ENCODE measurements at regions of chr10 and their contacts with region 1.

Region 1: DNA sequence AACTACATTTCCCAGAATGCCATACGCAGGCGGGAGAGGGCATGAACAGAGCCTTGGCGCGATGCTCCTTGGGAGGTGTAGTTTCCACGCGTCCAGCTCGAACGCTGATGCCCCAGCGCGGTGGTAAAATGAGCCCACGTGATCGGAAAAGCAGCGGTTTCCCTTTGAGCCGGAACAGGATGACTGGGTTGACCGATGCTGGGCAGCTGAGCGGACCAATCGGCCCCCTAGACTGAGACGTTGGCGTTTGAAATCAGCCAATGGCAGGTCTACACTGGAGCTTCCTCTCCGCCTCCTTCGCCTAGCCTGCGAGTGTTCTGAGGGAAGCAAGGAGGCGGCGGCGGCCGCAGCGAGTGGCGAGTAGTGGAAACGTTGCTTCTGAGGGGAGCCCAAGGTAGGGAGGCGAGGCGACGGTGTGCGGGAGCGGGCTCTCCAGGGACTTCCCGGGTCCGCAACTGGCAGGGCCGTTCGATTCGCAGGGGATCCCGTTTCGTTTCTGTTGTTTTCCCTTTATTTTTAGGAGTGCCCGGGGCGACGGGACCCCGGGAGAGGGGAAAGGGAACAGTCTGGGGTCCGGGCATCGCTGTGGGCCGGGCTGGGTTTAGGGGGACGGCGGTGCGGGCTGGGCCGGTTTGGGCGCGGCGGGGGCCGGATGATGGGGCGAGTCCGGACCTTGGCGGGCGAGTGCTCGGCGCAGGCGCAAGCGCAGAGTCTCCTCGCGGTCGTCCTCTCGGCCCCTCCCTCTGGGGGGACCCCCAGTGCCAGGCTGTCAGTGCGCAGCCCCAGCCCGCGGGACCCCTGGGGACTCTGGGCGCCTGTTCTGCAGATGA is at the start of gene BUB3:
- DNase-seq: peak; percentile 97 to 99
- ATAC-seq: peak; percentile 98 to 99 (median 98)
- H3K4me3 ChIP-seq: peak within 1 kb of the TSS; percentile 75
- H3K27ac ChIP-seq: peak within 1 kb of the TSS; percentile 84
- H3K4me1 ChIP-seq: peaks cover 41% of the 10 kb centered on the region
- H3K27me3 ChIP-seq: peaks cover 3 to 41% (median 24%) of the 10 kb centered on the region in 3 donors
- CTCF ChIP-seq: peak; percentile 18
- total RNA-seq, gene BUB3: 28.6 to 35.3 (median 31.2) TPM

Region 2: GRCh38 chr10:122953827-122954730 is 200.2 kb before region 1 on chr10 and contains the start of gene C10orf88:
- intact Hi-C with region 1: loop called in 1 of 2 experiments (anchors 10 kb)
- DNase-seq: peak; percentile 98 to 99
- ATAC-seq: peak; percentile 98 to 100 (median 100)
- H3K4me3 ChIP-seq: peak within 1 kb of the TSS; percentile 87
- H3K27ac ChIP-seq: peak within 1 kb of the TSS; percentile 84
- H3K4me1 ChIP-seq: peaks cover 2% of the 10 kb centered on the region
- H3K27me3 ChIP-seq: no peaks in the 10 kb centered on the region
- CTCF ChIP-seq: no peak
- total RNA-seq, gene C10orf88: 4.3 to 8.3 (median 6.8) TPM

Region 3: DNA sequence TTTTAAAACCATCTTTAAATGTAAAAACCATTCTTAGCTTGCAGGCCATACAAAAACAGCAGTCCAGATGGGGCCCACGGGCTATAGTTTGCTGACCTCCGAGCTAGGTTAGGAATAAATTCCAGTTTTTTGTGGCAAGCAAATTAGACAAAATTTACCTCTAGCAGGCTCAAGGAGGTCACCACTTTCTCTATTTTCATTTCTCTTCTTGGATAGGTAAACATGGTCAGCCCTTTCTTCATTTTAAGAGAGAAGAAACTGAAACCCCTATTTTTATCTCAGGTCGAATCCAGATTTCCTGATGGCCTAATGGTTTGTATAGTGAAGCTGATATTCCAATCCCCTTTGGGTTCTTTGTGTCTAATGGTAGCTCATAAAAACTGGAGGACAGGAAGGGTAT is 156.4 kb before region 1 on chr10:
- intact Hi-C with region 1: no loop called
- DNase-seq: no peak
- ATAC-seq: no peak
- H3K4me3 ChIP-seq: no peak overlapping the region
- H3K27ac ChIP-seq: no peak overlapping the region
- H3K4me1 ChIP-seq: peaks cover 9% of the 10 kb centered on the region
- H3K27me3 ChIP-seq: no peaks in the 10 kb centered on the region
- CTCF ChIP-seq: no peak

Region 4: DNA sequence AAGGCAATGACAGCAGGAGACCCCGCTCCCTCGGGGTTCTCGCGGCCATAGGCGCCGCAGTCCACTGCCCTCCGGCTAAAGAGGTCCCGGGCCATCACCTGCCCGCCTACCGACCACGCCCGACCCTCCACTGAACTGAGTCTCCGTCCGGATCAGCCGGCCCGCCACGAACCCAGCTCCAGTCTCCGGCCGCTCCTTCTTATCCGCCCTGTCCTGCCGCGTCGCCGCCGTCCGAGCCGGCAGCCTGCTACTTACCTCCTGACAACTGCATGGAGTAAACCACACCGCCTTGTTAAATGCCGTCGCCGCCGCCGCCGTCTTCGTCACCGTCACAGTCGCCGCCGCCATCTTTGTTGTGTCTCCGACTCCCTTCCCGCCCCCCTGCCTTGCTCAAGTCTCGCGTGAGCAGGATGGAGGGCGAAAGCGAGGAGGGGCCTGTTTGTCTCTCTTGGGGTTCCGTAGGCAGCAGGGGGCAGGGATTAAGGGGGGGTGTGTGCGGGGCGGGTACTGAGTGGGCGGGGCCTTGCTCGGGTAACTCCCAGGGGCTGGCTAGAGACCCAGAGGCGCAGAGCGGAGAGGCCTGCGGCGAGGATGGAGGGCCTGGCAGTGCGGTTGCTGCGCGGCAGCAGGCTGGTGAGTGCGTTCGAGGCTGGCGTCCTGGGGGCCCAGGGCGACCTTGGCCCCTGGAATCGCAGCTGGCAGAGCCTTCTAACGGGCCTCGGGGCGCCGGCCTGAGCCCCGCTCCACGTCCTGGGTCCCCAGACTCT is 145.7 kb before region 1 on chr10 and contains the starts of genes ACADSB and IKZF5:
- intact Hi-C with region 1: loop called (anchors 5 to 10 kb)
- DNase-seq: peak; percentile 95 to 98
- ATAC-seq: peak; percentile 95 to 98 (median 98)
- H3K4me3 ChIP-seq: peak within 1 kb of the TSS; percentile 100
- H3K27ac ChIP-seq: peak within 1 kb of the TSS; percentile 98
- H3K4me1 ChIP-seq: peaks cover 44% of the 10 kb centered on the region
- H3K27me3 ChIP-seq: no peaks in the 10 kb centered on the region
- CTCF ChIP-seq: no peak
- total RNA-seq, gene ACADSB: 37.4 to 50.1 (median 43.5) TPM
- total RNA-seq, gene IKZF5: 10.5 to 18.6 (median 11.9) TPM

Region 5: GRCh38 chr10:123019941-123020703 is 134.2 kb before region 1 on chr10:
- intact Hi-C with region 1: loop called in 1 of 2 experiments (anchors 10 kb)
- DNase-seq: no peak
- ATAC-seq: no peak
- H3K4me3 ChIP-seq: no peak overlapping the region
- H3K27ac ChIP-seq: no peak overlapping the region
- H3K4me1 ChIP-seq: no peaks in the 10 kb centered on the region
- H3K27me3 ChIP-seq: no peaks in the 10 kb centered on the region
- CTCF ChIP-seq: no peak

Region 6: GRCh38 chr10:123132576-123133477 is 21.5 kb before region 1 on chr10:
- intact Hi-C with region 1: loop called in 1 of 2 experiments (anchors 1 kb)
- DNase-seq: peak; percentile 80 to 90
- ATAC-seq: peak; percentile 83 to 89 (median 88)
- H3K4me3 ChIP-seq: peak overlapping the region; percentile 34
- H3K27ac ChIP-seq: no peak overlapping the region
- H3K4me1 ChIP-seq: peaks cover 29% of the 10 kb centered on the region
- H3K27me3 ChIP-seq: peaks cover 0 to 97% (median 53%) of the 10 kb centered on the region in 3 donors
- CTCF ChIP-seq: peak; percentile 89

Measured in psoas muscle (tissue), 8 donors.